Activated CD4-positive, alpha-beta T cell treated with anti-CD3 and anti-CD28 coated beads, Interleukin-2, amount 10 ng/mL, durations not matched to agents 24 days and 14 days (primary cell): ENCODE measurements at regions of chr17 and their contacts with region 1.

Region 1: DNA sequence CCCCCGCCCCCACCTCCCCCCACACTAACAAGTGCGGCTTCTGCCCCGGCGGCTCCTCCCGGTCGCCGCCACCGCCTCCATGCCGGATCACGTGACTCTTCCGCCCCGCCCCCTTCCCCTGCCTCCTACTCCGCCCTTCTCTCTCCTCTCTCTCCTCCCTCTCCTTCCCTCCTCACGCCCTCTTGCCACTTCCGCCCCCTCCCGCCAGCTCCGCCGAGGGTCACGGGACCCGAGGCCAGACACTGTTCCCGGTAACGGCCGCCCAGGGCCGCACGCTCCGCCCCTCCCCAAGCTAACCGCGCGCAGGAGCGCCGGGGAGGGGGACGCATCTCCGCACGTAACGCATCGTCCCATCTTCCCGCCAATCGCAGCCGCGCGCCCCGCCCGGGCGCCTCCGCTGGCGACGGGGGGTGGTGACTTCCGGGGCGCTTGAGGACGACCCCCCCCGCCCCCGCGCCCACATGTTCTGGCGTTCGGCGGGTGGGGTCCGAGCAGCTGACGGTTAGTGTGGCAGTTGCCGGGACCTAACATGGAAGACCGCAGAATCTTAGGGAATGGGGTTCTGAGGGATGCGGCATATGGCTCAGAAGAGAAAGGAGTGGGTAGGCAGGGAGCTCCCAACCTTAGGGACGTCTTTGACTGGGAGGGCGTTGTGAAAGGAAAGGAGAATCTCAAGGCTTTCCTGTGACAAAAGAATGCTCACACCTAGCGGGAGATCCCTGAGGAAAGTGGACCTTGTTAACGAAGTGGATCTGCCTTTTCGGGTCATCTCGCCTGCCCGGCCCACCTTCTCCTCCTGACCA is at the start of gene USP32:
- DNase-seq: peak; percentile 99
- H3K4me3 Mint-ChIP-seq: peak within 1 kb of the TSS; percentile 96
- H3K27ac Mint-ChIP-seq: peak within 1 kb of the TSS; percentile 99
- H3K4me1 Mint-ChIP-seq: peaks cover 38% of the 10 kb centered on the region
- H3K27me3 Mint-ChIP-seq: no peaks in the 10 kb centered on the region
- total RNA-seq, gene USP32: 30.2 and 34.3 TPM in 2 replicates

Region 2: DNA sequence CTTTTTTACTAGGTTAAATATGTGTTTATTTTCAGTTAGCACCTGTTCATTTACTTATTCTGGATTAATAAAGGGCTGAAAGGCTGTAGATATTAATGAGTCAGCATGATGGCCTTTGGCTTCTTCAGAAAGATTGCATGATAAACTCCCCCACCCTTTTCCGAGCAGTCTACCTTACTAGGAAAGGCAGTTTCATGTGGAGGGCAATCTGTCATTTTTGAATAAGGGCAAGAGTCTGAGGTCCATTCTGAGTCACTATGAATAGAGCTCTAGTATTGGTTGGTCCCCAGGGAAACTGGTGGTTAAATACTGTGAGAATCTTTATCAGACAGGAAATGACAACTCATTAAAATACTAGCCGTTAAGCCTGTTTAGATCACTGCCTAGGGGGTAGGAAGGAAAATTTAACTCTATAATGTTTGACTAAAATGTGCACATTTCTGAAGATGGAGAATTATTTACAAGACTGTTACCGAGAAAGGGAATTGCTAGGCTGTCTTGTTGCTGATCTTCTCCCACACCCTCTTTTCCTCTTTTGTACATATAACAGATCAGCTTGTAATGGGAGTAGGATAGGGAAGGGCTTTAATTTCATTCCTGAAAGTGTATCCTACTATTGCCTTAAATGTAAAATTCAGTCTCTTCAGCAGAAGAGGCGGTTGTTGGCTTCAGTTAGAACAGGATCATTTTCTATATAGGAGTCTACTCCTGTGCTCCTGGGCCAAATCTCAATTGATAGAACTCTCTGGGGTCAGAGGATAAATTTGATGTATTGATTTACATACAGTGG is 562.8 kb before region 1 on chr17:
- intact Hi-C with region 1: loop called (anchors 5 kb)
- DNase-seq: peak; percentile 89
- H3K4me3 Mint-ChIP-seq: peak overlapping the region; percentile 86
- H3K27ac Mint-ChIP-seq: peak overlapping the region; percentile 97
- H3K4me1 Mint-ChIP-seq: peaks cover 72% of the 10 kb centered on the region
- H3K27me3 Mint-ChIP-seq: no peaks in the 10 kb centered on the region

Region 3: GRCh38 chr17:60355663-60356594 is 36.3 kb before region 1 on chr17:
- intact Hi-C with region 1: loop called (anchors 1 kb)
- DNase-seq: no peak
- H3K4me3 Mint-ChIP-seq: peak overlapping the region; percentile 59
- H3K27ac Mint-ChIP-seq: peak overlapping the region; percentile 84
- H3K4me1 Mint-ChIP-seq: peaks cover 28% of the 10 kb centered on the region
- H3K27me3 Mint-ChIP-seq: no peaks in the 10 kb centered on the region

Region 4: DNA sequence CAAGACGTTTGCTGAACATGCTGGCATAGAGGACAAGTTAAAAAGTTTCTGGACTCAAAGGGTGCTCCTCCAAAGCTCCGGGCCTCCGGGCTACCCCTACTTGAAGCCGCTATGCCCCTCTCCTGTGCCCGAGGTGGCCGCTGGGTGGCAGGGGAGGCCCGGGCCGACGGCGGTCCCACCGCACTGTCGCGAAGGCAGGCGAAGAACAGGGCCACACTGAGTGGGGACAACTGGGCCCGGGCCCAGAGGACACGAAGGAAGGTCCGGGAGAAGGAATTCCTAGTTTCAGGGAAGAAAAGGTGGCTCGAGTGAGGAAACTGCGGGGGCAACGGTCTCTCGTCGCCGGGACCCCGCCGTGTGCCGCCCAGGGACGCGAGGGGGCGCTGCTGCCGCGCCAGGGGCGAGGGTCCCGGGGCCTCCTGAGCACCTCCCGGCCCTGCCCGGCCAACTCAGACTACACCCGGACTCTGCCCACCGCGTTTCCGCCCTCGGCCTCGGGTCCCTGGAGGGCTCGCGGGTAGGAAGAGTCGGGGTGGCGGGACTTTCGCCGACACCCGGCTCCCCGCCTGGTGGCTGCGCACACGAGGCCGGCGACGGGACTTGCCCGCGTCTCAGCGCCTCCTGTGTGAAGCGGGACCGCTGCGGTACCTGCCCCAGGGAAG is 29.2 kb after region 1 on chr17:
- intact Hi-C with region 1: loop called (anchors 1 kb)
- DNase-seq: peak; percentile 91
- H3K4me3 Mint-ChIP-seq: peak overlapping the region; percentile 84
- H3K27ac Mint-ChIP-seq: peak overlapping the region; percentile 82
- H3K4me1 Mint-ChIP-seq: peaks cover 6% of the 10 kb centered on the region
- H3K27me3 Mint-ChIP-seq: peaks cover 8% of the 10 kb centered on the region

Region 5: GRCh38 chr17:60525685-60526514 is 133.7 kb after region 1 on chr17 and contains the start of gene APPBP2:
- intact Hi-C with region 1: loop called (anchors 2 kb)
- DNase-seq: peak; percentile 94
- H3K4me3 Mint-ChIP-seq: peak within 1 kb of the TSS; percentile 97
- H3K27ac Mint-ChIP-seq: peak within 1 kb of the TSS; percentile 97
- H3K4me1 Mint-ChIP-seq: peaks cover 37% of the 10 kb centered on the region
- H3K27me3 Mint-ChIP-seq: peaks cover 6% of the 10 kb centered on the region
- total RNA-seq, gene APPBP2: 21.4 and 25.1 TPM in 2 replicates

Region 6: DNA sequence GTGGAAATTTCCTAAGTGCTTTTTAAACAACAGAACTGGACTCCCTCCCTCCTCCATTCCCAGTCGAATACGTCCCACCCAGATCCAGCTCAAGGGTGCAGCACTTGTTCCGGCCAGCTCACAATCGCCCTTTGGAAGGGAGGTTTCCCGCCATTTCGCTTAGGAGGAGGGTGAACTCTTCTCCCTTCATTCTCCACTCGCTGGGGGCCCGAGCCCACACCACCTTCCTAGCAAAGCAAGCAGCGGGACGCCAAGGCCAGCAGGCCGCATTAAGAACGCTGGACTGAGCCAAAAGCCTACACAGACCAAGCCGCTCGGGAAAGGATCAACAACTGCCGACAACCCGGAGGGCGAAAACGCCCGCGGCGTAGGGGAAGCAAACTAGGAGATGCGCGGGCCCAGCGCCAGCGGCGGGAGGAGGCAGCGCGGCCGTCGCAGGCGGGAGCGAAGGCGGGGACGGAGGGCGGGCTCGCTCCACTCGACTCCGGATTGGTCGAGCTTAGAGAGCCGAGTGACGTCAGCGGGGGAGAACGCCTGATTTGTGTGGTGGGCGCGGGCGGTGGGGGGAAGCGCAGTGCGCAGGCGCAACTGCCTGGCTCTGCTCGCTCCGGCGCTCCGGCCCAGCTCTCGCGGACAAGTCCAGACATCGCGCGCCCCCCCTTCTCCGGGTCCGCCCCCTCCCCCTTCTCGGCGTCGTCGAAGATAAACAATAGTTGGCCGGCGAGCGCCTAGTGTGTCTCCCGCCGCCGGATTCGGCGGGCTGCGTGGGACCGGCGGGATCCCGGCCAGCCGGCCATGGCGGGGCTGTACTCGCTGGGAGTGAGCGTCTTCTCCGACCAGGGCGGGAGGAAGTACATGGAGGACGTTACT is 207.6 kb after region 1 on chr17 and contains the start of gene PPM1D:
- intact Hi-C with region 1: loop called (anchors 2 kb)
- DNase-seq: peak; percentile 99
- H3K4me3 Mint-ChIP-seq: peak within 1 kb of the TSS; percentile 95
- H3K27ac Mint-ChIP-seq: peak within 1 kb of the TSS; percentile 98
- H3K4me1 Mint-ChIP-seq: peaks cover 37% of the 10 kb centered on the region
- H3K27me3 Mint-ChIP-seq: no peaks in the 10 kb centered on the region
- total RNA-seq, gene PPM1D: 17.1 and 17.9 TPM in 2 replicates

Region 7: DNA sequence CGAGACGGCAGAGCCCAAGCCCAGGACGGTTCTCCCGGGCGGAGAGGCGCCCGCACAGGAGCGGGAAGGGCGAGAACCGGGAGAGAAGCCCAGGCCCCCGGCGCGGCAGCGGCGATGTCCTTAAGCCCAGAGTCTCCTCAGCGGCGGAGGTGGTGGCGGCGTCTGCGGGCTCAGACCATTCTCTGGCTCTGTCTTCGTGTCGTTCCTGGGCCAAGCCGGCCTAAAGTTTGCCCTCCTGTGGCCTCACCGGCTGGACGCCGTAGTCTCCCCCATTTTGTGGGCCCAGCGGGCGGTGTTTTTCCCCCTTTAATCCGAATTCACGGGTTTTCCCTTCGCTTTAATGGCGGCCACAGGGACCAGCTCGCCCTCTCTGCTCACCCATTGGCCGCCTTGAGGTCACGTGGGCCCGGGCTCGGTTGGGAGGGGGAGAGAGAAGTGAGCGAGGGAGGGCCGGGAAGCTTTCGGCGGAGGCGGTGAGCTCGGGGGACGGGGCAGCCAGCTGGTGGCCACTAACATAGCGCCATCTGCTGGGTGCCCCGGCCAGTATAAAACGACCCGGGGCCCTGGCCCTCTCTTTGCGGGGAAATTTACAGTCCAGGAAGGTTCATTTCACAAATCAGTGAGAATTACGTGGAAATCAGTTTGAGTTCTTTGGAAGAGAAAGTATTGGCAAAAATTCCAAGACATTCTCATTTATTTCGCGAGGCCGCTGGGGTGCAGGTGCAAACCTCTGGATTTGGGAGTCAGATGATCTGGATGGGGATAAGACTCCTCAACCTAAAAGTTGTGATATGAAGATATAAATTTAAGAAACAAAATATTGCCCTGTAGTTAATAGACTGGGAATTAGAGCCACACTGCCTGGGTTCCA is 1673.6 kb after region 1 on chr17:
- intact Hi-C with region 1: loop called (anchors 10 kb)
- DNase-seq: peak; percentile 99
- H3K4me3 Mint-ChIP-seq: peak overlapping the region; percentile 97
- H3K27ac Mint-ChIP-seq: peak overlapping the region; percentile 99
- H3K4me1 Mint-ChIP-seq: peaks cover 29% of the 10 kb centered on the region
- H3K27me3 Mint-ChIP-seq: no peaks in the 10 kb centered on the region